Esophagus muscularis mucosa (tissue), 4 donors: ENCODE measurements at regions of chr1 and their contacts with region 1.

Region 1: DNA sequence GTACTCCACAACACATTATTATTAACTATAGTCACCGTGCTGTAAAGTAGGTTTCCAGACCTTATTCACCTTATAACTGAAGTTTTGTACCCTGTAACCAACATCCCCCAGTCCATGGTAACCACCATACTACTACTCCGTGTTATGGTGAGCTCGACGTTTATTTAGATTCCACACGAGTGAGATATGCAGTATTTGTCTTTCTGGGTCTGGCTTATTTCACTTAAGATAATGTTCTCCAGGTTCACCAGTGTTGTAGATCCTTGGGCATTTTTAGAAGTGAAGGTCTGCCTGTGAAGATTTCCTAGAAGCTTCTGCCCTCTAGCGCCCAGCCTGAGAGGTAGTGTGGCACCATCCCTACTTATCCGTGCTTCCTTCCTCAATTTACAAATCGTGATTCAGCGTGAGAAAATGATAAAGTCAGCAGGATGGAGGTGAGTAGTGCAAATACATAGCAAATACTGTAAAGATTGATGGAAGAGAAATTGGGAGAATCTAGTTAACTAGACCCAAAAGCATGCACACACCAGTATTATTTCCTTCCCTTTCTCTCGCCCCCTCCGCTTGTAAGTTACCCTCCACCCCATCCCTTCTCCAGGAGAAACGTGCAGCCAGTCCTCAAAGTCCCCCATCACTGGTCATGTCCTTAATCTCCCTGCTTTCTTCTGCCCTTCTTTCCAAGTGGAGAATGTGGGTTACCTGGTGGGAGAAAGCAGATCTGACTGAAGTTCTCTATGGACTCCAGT is 36.0 kb upstream of the DISC1 start:
- DNase-seq: no peak
- H3K4me3 ChIP-seq: no peak overlapping the region
- H3K27ac ChIP-seq: no peak overlapping the region
- H3K4me1 ChIP-seq: peaks cover 0 to 12% (median 9%) of the 10 kb centered on the region in 4 donors
- H3K27me3 ChIP-seq: no peaks in the 10 kb centered on the region
- CTCF ChIP-seq: peak; percentile 72 to 77 (median 73)
- EP300 ChIP-seq: no peak
- POLR2A ChIP-seq: no peak

Region 2: GRCh38 chr1:231534703-231535159 is 55.9 kb before region 1 on chr1:
- intact Hi-C with region 1: loop called (anchors 5 kb)
- DNase-seq: no peak
- H3K4me3 ChIP-seq: no peak overlapping the region
- H3K27ac ChIP-seq: peak overlapping the region in 1 of 4 donors; percentile 9
- H3K4me1 ChIP-seq: peaks cover 32 to 58% (median 51%) of the 10 kb centered on the region in 4 donors
- H3K27me3 ChIP-seq: no peaks in the 10 kb centered on the region
- CTCF ChIP-seq: no peak
- EP300 ChIP-seq: no peak
- POLR2A ChIP-seq: no peak